K562 (cell line): ENCODE measurements at regions of chr16 and their contacts with region 1.

Region 1: GRCh38 chr16:55643161-55643970 is 12.4 kb upstream of the SLC6A2 start:
- DNase-seq: peak in 2 of 4 experiments; percentile 37 to 55
- ATAC-seq: peak; percentile 94
- H3K4me3 ChIP-seq: no peak overlapping the region
- H3K27ac ChIP-seq: no peak overlapping the region
- H3K4me1 ChIP-seq: no peaks in the 10 kb centered on the region
- H3K27me3 ChIP-seq: peaks cover 7 to 17% of the 10 kb centered on the region in 2 experiments; a peak in 3 of 5 replicates
- CTCF ChIP-seq: peak; percentile 51 to 56 (median 54); a peak in 5 of 6 replicates
- EP300 ChIP-seq: no peak
- POLR2A ChIP-seq: no peak
- RAD21 ChIP-seq: peak; percentile 51 to 78; a peak in 3 of 4 replicates

Region 2: DNA sequence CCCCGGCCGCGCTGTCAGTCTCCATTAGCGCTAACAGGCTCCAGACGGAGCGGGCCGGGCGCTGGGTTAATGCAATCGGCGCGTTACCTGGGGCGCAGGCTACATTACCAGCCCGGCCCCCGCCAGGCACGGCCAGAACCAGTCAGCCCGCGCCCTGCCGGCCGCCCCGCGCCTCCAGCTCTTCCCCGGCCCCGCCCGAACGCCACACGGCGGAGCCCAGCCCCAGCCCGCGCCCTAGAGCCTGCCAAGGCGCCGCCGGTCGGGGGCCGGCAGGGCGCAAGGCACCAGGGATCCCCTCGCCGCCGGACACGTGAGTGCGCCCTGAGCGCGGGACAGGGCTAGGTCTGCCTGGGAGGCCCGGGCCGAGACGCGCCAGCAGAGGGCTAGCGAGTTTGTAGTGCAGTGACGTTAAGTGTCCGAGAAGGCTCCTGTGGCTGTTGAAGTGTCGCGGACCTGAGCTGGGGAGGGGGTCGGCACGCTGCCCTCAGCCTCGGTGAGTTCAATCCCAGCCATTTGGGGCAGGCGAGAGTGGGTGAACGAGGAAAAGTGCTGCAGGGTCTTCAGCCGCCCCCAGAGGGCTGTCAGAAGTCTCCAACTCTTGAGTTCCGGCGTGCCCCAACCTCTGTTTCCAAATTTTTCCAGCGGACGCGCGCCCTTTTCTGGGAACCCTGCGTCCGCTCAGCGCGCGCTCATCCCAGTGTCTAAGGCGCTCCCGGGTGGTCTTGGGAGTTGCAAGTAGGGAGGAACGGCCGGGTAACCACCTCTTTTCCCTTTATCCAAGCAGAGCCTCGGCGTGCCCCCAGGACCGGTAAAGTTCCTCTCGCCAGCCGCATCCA is 12.7 kb after region 1 on chr16 and contains the start of gene SLC6A2:
- CTCF ChIA-PET with region 1: no interaction called
- POLR2A ChIA-PET with region 1: no interaction called
- in situ Hi-C with region 1: no loop called
- intact Hi-C with region 1: no loop called
- DNase-seq: no peak
- ATAC-seq: no peak
- H3K4me3 ChIP-seq: no peak within 1 kb of the TSS
- H3K27ac ChIP-seq: no peak within 1 kb of the TSS
- H3K4me1 ChIP-seq: no peaks in the 10 kb centered on the region
- H3K27me3 ChIP-seq: peaks cover 12 to 54% of the 10 kb centered on the region in 2 experiments; a peak in 4 of 5 replicates
- CTCF ChIP-seq: no peak
- EP300 ChIP-seq: no peak
- POLR2A ChIP-seq: no peak
- RAD21 ChIP-seq: no peak
- polyA plus RNA-seq, gene SLC6A2: not detected

Region 3: GRCh38 chr16:55701442-55702319 is 58.3 kb after region 1 on chr16:
- CTCF ChIA-PET with region 1: interaction called, 3 read pairs
- POLR2A ChIA-PET with region 1: no interaction called
- in situ Hi-C with region 1: no loop called
- intact Hi-C with region 1: loop called (anchors 5 kb)
- DNase-seq: peak; percentile 71 to 75 (median 74)
- ATAC-seq: peak; percentile 98
- H3K4me3 ChIP-seq: no peak overlapping the region
- H3K27ac ChIP-seq: no peak overlapping the region
- H3K4me1 ChIP-seq: no peaks in the 10 kb centered on the region
- H3K27me3 ChIP-seq: peaks cover 0 to 4% of the 10 kb centered on the region in 2 experiments; a peak in 3 of 5 replicates
- CTCF ChIP-seq: peak; percentile 74 to 82 (median 78)
- EP300 ChIP-seq: no peak
- POLR2A ChIP-seq: no peak
- RAD21 ChIP-seq: peak; percentile 68 to 85

Region 4: DNA sequence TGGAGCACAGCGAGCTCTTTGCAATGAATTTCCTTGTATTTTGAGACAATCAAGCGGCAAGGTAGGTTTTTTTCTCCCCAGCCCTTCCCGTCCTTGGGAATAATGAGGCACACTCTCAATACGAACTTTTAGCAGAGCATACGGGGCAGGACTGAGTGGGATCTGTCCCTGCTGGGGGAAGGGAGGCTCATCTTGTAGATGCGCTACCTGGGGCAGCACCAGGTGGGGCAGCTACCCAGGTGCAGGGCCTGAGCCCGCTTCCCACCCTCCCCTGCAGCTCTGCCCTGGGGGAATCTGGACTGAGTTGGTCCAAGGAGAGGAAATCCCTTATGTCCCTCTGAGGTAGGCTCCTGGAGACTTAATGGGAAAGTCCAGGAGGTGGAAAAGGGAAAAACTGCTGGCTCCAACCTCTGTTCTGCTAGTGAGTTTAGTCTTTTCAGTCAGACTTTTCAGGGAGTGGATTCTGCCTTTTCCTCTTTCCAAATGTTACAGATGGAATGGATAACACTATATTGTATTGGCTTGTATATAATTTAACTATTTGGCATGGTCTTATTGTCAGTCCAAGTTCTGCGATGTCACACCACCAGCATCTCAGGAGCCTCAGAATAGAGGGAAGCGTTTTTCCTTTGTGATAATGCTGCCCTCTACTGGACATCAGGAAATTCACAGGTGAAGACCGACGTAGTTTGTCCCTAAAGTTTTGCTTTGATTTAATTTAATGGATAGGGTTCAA is 199.2 kb after region 1 on chr16:
- CTCF ChIA-PET with region 1: no interaction called
- POLR2A ChIA-PET with region 1: no interaction called
- in situ Hi-C with region 1: no loop called
- intact Hi-C with region 1: loop called (anchors 10 kb)
- DNase-seq: peak; percentile 59 to 61 (median 60)
- ATAC-seq: peak; percentile 85
- H3K4me3 ChIP-seq: no peak overlapping the region
- H3K27ac ChIP-seq: no peak overlapping the region
- H3K4me1 ChIP-seq: no peaks in the 10 kb centered on the region
- H3K27me3 ChIP-seq: peaks cover 0 to 7% of the 10 kb centered on the region in 2 experiments; a peak in 2 of 5 replicates
- CTCF ChIP-seq: peak; percentile 65 to 85 (median 67)
- EP300 ChIP-seq: no peak
- POLR2A ChIP-seq: no peak
- RAD21 ChIP-seq: peak; percentile 82 to 86